K562 (cell line): ENCODE measurements at regions of chr17 and their contacts with region 1.

Region 1: GRCh38 chr17:43309505-43310332 is 75.9 kb upstream of the RNU2-1 start:
- DNase-seq: no peak
- ATAC-seq: no peak
- H3K4me3 ChIP-seq: no peak overlapping the region
- H3K27ac ChIP-seq: no peak overlapping the region
- H3K4me1 ChIP-seq: peaks cover 3 to 4% of the 10 kb centered on the region in 2 experiments; a peak in 3 of 5 replicates
- H3K27me3 ChIP-seq: no peaks in the 10 kb centered on the region
- CTCF ChIP-seq: no peak
- EP300 ChIP-seq: no peak
- POLR2A ChIP-seq: no peak
- RAD21 ChIP-seq: no peak

Region 2: GRCh38 chr17:42895185-42895555 is 414.5 kb before region 1 on chr17:
- CTCF ChIA-PET with region 1: no interaction called
- POLR2A ChIA-PET with region 1: no interaction called
- in situ Hi-C with region 1: no loop called
- intact Hi-C with region 1: no loop called
- DNase-seq: no peak
- ATAC-seq: no peak
- H3K4me3 ChIP-seq: no peak overlapping the region
- H3K27ac ChIP-seq: no peak overlapping the region
- H3K4me1 ChIP-seq: no peaks in the 10 kb centered on the region
- H3K27me3 ChIP-seq: peaks cover 0 to 8% of the 10 kb centered on the region in 2 experiments; a peak in 2 of 5 replicates
- CTCF ChIP-seq: no peak
- EP300 ChIP-seq: no peak
- POLR2A ChIP-seq: no peak
- RAD21 ChIP-seq: no peak

Region 3: GRCh38 chr17:43338886-43339516 is 29.3 kb after region 1 on chr17:
- CTCF ChIA-PET with region 1: interaction called, 10 read pairs
- POLR2A ChIA-PET with region 1: no interaction called
- in situ Hi-C with region 1: no loop called
- intact Hi-C with region 1: no loop called
- DNase-seq: no peak
- ATAC-seq: no peak
- H3K4me3 ChIP-seq: no peak overlapping the region
- H3K27ac ChIP-seq: no peak overlapping the region
- H3K4me1 ChIP-seq: no peaks in the 10 kb centered on the region; a peak in 1 of 5 replicates
- H3K27me3 ChIP-seq: no peaks in the 10 kb centered on the region
- CTCF ChIP-seq: peak; percentile 32 to 62 (median 60); a peak in 5 of 6 replicates
- EP300 ChIP-seq: no peak
- POLR2A ChIP-seq: no peak
- RAD21 ChIP-seq: peak; percentile 34 to 57; a peak in 2 of 4 replicates

Region 4: DNA sequence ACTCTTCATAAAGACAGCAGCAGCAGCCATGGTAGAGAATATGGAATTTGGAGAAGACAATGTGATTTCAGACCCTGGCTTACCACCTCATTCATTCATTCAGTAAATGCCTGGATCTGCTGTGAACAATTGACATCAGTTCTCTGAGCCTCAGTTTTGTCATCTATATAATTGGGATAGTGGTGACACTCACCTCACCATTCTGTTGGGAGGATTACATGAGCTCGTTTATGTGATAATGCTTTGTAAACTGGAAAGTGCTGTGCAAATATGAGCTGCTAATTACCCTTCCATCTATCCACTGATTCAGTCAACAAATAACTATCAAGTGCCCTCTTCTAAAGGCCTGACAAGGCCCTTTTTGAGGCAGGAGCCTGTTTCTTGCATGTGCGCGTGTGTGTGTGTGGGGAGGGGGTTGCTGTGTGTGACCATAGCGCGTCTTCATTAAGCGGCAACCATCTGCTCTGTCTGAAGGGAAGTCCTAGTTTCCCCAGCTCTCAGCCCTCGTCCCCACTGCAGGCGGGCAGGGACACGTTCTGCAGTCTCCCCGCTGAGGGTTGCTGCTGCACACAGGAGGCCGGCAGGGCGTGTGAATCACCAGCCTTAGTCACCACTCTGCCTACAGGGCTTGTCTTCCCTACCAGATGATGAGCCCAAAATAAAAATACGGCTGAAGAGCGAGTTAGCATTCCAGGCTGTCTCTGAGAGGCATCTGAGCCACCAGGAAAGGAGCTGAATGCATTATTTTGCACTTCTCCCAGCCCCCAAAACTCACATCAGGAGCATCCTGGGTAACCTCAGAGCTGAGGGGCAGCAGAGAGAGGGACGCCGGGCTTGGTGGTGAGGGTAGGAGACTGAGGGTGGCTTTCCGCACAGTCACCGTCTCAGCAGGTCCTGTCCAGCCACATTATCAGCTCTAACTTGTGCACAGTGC is 109.0 kb after region 1 on chr17:
- CTCF ChIA-PET with region 1: no interaction called
- POLR2A ChIA-PET with region 1: no interaction called
- in situ Hi-C with region 1: no loop called
- intact Hi-C with region 1: no loop called
- DNase-seq: peak in 2 of 4 experiments; percentile 15 to 21
- ATAC-seq: peak; percentile 71
- H3K4me3 ChIP-seq: no peak overlapping the region
- H3K27ac ChIP-seq: no peak overlapping the region
- H3K4me1 ChIP-seq: peaks cover 0 to 10% of the 10 kb centered on the region in 2 experiments; a peak in 2 of 5 replicates
- H3K27me3 ChIP-seq: peaks cover 27 to 32% of the 10 kb centered on the region in 2 experiments; a peak in 4 of 5 replicates
- CTCF ChIP-seq: no peak
- EP300 ChIP-seq: no peak
- POLR2A ChIP-seq: no peak
- RAD21 ChIP-seq: no peak

Region 5: DNA sequence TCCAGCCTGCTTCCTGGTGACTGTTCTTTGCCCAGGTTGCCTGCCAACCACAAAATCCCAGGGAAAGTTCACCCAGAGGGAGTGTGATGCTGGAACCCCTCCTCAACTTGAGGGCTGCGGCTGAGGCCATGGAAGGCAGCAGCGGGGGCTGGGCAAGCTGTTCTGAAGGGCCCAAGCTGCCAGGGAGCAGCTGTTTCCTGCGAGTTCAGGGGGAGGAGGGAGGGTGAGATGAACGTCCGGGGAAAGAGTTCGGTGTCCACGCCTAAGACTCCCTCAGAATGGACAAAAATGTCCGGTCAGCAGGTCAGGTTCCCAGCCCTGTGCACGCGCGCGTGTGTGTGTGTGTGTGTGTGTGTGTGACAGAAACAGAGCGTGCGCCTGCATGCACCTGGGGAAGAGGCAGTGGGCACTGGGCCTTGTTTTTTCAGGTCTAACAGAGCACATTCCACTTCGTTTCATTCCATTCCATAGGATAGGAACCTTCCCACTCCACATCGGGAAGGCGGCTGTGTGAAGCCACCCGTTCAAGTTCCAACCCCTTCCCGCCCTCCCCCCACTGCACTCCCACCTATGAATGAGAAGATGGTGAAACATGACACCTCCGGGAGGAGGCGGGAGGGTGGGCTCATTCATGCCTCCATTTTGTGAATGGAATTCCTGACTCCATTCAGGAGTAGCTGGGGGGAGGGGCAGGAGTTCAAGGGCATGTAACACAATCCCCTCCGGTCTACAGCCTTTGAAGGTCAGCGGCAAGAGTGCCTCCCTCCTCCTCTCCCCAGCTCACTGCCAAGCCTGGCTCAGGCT is 220.8 kb after region 1 on chr17:
- CTCF ChIA-PET with region 1: no interaction called
- POLR2A ChIA-PET with region 1: no interaction called
- in situ Hi-C with region 1: no loop called
- intact Hi-C with region 1: no loop called
- DNase-seq: peak; percentile 49 to 89 (median 61)
- ATAC-seq: peak; percentile 69
- H3K4me3 ChIP-seq: no peak overlapping the region
- H3K27ac ChIP-seq: peak overlapping the region; percentile 88
- H3K4me1 ChIP-seq: peaks cover 25 to 33% of the 10 kb centered on the region in 2 experiments
- H3K27me3 ChIP-seq: no peaks in the 10 kb centered on the region
- CTCF ChIP-seq: no peak
- EP300 ChIP-seq: no peak
- POLR2A ChIP-seq: peak; percentile 70
- RAD21 ChIP-seq: no peak